Natural killer cell (primary cell): ENCODE measurements at regions of chr20 and their contacts with region 1.

Region 1: DNA sequence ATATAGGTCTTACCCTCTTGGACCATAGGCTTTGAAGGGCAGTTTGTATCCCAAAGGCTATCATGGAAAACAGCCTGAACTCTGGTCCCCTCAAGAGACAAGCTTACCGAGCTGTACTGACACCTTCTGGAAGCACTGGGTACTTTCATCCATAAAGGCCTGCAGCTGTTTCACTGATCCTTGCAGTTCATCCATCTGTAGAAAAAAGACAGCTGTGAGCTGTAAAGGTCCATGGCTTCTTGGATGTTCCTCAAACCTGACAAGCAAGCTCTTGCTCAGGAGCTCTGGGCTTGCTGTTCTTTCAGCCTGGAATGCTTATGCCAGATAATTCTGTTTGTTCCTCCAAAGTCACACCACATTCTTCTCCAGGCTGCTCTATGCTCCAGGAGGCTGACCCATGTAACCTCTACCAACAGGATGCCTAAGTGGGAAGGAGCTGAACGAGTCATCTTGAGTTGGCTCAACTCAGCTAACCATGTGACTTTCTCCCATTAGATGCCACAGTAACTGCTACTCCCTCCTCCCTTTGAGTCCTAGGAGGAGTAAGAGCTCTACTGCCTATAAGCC is 8.8 kb upstream of the NDRG3 start:
- DNase-seq: peak in 1 of 2 donors; percentile 77
- ATAC-seq: peak; percentile 77 to 92 (median 84)
- H3K4me3 ChIP-seq: no peak overlapping the region
- H3K4me3 Mint-ChIP-seq: no peak overlapping the region
- H3K27ac ChIP-seq: no peak overlapping the region
- H3K27ac Mint-ChIP-seq: no peak overlapping the region
- H3K4me1 ChIP-seq: peaks cover 9% of the 10 kb centered on the region
- H3K4me1 Mint-ChIP-seq: peaks cover 6% of the 10 kb centered on the region in 2 donors
- H3K27me3 ChIP-seq: no peaks in the 10 kb centered on the region
- H3K27me3 Mint-ChIP-seq: no peaks in the 10 kb centered on the region
- CTCF ChIP-seq: peak; percentile 67

Region 2: DNA sequence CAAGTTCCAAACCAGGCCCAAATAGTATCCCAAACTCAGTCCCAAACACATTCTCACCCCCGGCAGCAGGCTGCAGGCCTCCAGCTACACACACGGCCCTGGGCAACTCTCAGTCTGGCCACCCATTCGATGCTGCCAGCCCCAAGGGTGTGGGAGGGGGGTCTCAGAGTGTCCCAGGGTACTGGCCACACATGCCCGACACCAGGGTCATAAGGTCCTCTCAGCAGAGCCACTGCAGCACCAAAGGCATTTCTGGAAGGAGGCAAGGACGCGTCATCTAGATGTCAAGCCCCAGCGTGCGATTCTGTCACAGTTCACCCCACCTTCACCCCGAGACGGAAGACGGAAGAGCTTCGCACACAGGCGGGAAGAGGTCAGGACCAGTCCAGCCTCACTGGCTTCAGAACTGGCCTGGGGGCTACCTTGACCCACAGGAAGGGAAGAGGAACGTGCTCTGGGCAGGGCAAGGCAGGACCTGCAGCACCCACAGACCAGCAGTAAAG is 203.9 kb before region 1 on chr20:
- intact Hi-C with region 1: loop called (anchors 1 kb)
- DNase-seq: no peak
- ATAC-seq: no peak
- H3K4me3 ChIP-seq: no peak overlapping the region
- H3K4me3 Mint-ChIP-seq: no peak overlapping the region
- H3K27ac ChIP-seq: no peak overlapping the region
- H3K27ac Mint-ChIP-seq: no peak overlapping the region
- H3K4me1 ChIP-seq: no peaks in the 10 kb centered on the region
- H3K4me1 Mint-ChIP-seq: no peaks in the 10 kb centered on the region
- H3K27me3 ChIP-seq: no peaks in the 10 kb centered on the region
- H3K27me3 Mint-ChIP-seq: no peaks in the 10 kb centered on the region
- CTCF ChIP-seq: no peak

Region 3: DNA sequence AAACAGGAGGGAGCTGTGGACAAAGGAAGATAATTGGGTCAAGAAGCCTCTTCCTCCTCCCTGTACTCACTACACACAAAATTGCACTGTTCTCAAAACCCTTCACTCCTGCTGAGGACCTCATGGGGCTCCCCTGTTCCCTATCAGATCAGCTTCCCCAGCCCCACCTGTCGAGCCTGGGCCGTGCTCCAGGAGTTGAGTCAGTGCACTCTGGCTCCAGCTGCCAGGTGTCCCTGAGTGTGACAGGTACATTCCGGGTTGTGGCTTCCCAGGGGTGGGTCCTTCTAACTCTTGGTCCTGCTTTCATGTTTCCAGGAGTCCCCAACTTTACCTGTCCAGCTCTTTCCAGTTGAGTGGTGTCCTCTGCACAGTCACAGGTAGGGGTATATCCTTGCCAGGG is 140.8 kb before region 1 on chr20:
- intact Hi-C with region 1: loop called (anchors 1 kb)
- DNase-seq: no peak
- ATAC-seq: no peak
- H3K4me3 ChIP-seq: no peak overlapping the region
- H3K4me3 Mint-ChIP-seq: peak overlapping the region; percentile 28
- H3K27ac ChIP-seq: no peak overlapping the region
- H3K27ac Mint-ChIP-seq: peak overlapping the region; percentile 80 to 85
- H3K4me1 ChIP-seq: peaks cover 11% of the 10 kb centered on the region
- H3K4me1 Mint-ChIP-seq: peaks cover 7 to 43% of the 10 kb centered on the region in 2 donors
- H3K27me3 ChIP-seq: no peaks in the 10 kb centered on the region
- H3K27me3 Mint-ChIP-seq: no peaks in the 10 kb centered on the region
- CTCF ChIP-seq: no peak